Transverse colon (tissue), 4 donors: ENCODE measurements at regions of chr6 and their contacts with region 1.

Region 1: DNA sequence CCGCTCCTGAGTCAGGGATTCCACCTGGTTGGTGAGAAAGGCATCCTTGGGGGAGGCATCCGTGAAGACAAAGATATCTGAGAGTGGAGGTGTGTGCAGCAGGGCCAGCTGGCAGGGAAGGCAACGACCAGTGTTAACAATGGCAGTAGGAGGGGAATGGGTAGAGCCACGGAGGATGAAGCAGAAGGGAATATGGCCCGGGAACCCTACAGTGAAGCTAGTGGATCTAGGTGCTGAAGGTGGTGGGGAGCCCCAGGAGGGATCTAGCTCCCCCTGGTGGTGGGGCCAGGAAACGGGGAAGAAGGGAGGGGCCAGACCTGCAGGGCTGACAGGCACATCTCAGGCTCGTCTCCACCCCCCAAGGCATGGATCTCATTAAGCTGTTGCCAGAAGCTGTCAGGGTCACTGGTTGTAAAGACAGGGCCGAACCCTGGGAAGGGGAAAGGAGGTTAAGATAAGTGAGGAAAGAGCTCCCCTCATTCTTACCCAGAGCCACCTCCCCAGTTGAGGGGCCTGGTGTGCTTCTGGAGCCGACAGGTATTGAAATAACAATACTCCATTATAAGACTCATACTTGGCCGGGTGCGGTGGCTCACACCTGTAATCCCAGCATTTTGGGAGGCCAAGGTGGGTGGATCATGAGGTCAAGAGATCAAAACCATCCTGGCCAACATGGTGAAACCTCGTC is 7.3 kb downstream of the VWA7 start:
- DNase-seq: peak; percentile 94
- H3K4me3 ChIP-seq: no peak overlapping the region
- H3K27ac ChIP-seq: peak overlapping the region; percentile 76 to 83 (median 78)
- H3K4me1 ChIP-seq: peaks cover under 1 to 21% (median 9%) of the 10 kb centered on the region in 4 donors
- H3K27me3 ChIP-seq: no peaks in the 10 kb centered on the region
- CTCF ChIP-seq: peak; percentile 83 to 95 (median 90)
- EP300 ChIP-seq: no peak
- POLR2A ChIP-seq: no peak

Region 2: DNA sequence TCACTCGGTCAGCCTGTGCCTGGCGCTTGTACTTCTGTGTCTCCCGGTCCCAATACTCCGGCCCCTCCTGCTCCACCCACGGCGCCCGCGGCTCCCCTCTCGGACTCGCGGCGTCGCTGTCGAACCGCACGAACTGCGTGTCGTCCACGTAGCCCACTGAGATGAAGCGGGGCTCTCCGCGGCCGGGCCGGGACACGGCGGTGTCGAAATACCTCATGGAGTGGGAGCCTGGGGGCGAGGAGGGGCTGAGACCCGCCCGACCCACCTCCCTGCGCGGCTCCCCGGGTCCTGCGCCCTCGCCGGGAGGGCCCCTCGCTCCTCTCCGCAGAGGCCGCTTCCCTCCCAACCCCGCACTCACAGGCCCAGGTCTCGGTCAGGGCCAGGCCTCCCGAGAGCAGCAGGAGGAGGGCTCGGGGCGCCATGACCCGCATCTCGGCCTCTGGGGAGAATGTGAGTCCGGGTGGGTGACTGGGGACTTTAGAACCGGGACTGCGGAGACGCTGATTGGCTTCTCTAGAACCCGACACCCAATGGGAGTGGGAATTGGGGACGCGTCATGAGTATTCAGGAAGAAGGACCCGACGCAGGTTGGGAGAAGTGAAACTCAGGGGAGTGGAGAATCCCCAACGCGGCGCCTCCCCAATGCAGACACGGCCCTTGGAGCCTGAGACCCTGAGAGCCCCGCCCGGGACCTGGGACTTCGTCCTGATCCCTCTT is 498.0 kb before region 1 on chr6 and contains the start of gene HLA-C:
- in situ Hi-C with region 1: no loop called
- intact Hi-C with region 1: no loop called
- DNase-seq: peak; percentile 96
- H3K4me3 ChIP-seq: peak within 1 kb of the TSS; percentile 41 to 89 (median 78)
- H3K27ac ChIP-seq: peak within 1 kb of the TSS; percentile 78 to 100 (median 98)
- H3K4me1 ChIP-seq: peaks cover 0 to 15% (median 6%) of the 10 kb centered on the region in 4 donors
- H3K27me3 ChIP-seq: no peaks in the 10 kb centered on the region
- CTCF ChIP-seq: peak in 1 of 5 experiments; percentile 14
- EP300 ChIP-seq: no peak
- POLR2A ChIP-seq: peak; percentile 86
- total RNA-seq, gene HLA-C: 200 to 1,614 (median 1,271) TPM

Region 3: GRCh38 chr6:31621991-31622390 is 147.8 kb before region 1 on chr6:
- in situ Hi-C with region 1: no loop called
- intact Hi-C with region 1: no loop called
- DNase-seq: peak; percentile 33
- H3K4me3 ChIP-seq: peak overlapping the region in 3 of 4 donors; percentile 73 to 99 (median 79)
- H3K27ac ChIP-seq: peak overlapping the region; percentile 94 to 99 (median 97)
- H3K4me1 ChIP-seq: peaks cover 0 to 22% (median 20%) of the 10 kb centered on the region in 4 donors
- H3K27me3 ChIP-seq: no peaks in the 10 kb centered on the region
- CTCF ChIP-seq: no peak
- EP300 ChIP-seq: no peak
- POLR2A ChIP-seq: no peak

Region 4: DNA sequence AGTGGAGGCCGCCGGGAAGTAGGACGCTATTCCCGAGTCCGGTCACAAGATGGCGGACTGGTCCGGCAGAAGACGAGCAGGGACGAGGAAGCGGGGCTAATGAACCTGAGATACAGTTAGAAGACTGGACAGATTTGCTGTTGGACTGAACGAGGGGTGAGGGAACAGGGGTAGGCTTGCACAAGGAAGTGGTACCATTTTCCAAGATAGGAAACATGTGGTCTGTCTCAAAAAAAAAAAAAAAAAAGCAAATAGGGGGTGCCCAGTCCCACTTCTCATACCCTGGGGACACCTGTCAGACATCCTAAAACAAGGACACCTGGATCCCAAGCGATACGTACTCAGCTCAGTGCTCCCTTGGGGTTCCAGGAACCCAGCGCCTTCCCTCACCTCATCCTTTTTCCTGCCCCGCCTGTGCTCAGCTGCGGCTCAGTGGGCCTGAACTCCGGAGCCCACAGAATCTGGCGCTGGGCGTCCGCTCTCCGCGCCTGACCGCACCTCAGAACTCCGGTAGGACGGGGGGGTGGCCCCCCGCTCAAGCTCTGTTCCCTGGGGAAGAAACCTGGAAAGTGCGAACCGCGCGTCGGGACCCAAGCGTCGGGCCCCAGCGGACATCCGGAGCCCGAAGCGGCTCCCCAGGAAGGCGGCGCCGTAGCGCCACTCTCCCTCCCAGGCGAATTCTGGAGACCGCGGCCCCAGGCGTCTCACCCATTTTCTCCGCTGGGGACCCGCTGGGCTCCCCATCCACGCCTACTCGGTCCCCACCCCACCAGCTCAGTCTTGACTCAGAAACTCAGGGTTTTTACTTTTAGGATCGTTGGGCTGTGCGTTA is 88.8 kb before region 1 on chr6 and contains the start of gene LY6G5C:
- in situ Hi-C with region 1: loop called in 2 of 4 experiments (anchors 5 to 10 kb)
- intact Hi-C with region 1: no loop called
- DNase-seq: peak; percentile 89
- H3K4me3 ChIP-seq: peak within 1 kb of the TSS; percentile 42 to 63 (median 43)
- H3K27ac ChIP-seq: peak within 1 kb of the TSS; percentile 70 to 85 (median 78)
- H3K4me1 ChIP-seq: peaks cover 5 to 26% (median 11%) of the 10 kb centered on the region in 4 donors
- H3K27me3 ChIP-seq: no peaks in the 10 kb centered on the region
- CTCF ChIP-seq: peak; percentile 52 to 78 (median 69)
- EP300 ChIP-seq: no peak
- POLR2A ChIP-seq: peak; percentile 31
- total RNA-seq, gene LY6G5C: 0.95 to 2.2 TPM in 2 of 4 donors, not detected in the others

Region 5: GRCh38 chr6:31689249-31690110 is 80.3 kb before region 1 on chr6:
- in situ Hi-C with region 1: loop called in 2 of 4 experiments (anchors 5 to 10 kb)
- intact Hi-C with region 1: no loop called
- DNase-seq: no peak
- H3K4me3 ChIP-seq: no peak overlapping the region
- H3K27ac ChIP-seq: peak overlapping the region in 3 of 4 donors; percentile 8 to 48 (median 43)
- H3K4me1 ChIP-seq: no peaks in the 10 kb centered on the region
- H3K27me3 ChIP-seq: no peaks in the 10 kb centered on the region
- CTCF ChIP-seq: peak in 4 of 5 experiments; percentile 11 to 32 (median 22)
- EP300 ChIP-seq: no peak
- POLR2A ChIP-seq: no peak

Region 6: DNA sequence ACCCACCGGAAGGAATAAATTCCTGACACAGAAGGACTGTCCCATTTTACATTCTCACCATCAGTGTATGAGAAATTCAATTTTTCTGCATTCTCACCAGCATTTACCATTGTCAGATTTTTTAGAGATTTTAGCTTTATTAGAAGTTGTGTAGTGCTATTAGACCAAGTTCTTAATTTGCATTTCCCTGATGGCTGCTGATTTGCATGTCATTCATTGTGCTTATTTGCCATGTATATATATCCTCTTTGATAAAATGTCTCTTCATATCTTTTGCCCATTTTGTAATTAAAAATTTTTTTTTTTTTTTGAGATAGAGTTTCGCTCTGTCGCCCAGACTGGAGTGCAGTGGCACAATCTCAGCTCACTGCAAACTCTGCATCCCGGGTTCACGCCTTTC is 770.0 kb after region 1 on chr6:
- in situ Hi-C with region 1: no loop called
- intact Hi-C with region 1: no loop called
- DNase-seq: no peak
- H3K4me3 ChIP-seq: no peak overlapping the region
- H3K27ac ChIP-seq: no peak overlapping the region
- H3K4me1 ChIP-seq: no peaks in the 10 kb centered on the region
- H3K27me3 ChIP-seq: no peaks in the 10 kb centered on the region
- CTCF ChIP-seq: no peak
- EP300 ChIP-seq: no peak
- POLR2A ChIP-seq: no peak